Psoas muscle (tissue), 8 donors: ENCODE measurements at regions of chr18 and their contacts with region 1.

Region 1: GRCh38 chr18:2655178-2655953 is at the start of gene SMCHD1:
- DNase-seq: peak; percentile 93 to 96
- ATAC-seq: peak; percentile 88 to 92 (median 91)
- H3K4me3 ChIP-seq: peak within 1 kb of the TSS; percentile 90
- H3K27ac ChIP-seq: peak within 1 kb of the TSS; percentile 96
- H3K4me1 ChIP-seq: peaks cover 22% of the 10 kb centered on the region
- H3K27me3 ChIP-seq: no peaks in the 10 kb centered on the region
- CTCF ChIP-seq: no peak
- total RNA-seq, gene SMCHD1: 20.3 to 23.0 (median 21.6) TPM

Region 2: DNA sequence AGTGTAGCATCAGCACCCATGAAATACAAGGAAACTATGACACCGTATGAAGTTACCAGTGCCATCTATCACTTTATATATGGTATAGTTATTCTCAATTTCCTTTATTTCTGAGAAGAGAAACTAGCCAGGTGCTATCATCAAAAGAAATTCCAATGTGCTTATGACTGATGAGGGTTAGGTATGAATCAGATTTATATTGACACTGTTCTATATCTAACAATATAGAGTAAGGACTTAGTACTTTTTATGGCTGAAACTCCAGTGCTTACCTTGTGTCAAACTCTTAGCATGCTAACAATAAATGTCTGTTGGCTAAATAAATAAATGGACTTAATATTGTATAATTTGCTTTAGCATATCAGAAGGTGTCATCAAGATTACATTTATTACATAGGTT is 91.0 kb before region 1 on chr18:
- intact Hi-C with region 1: loop called in 1 of 2 experiments (anchors 10 kb)
- DNase-seq: no peak
- ATAC-seq: no peak
- H3K4me3 ChIP-seq: no peak overlapping the region
- H3K27ac ChIP-seq: no peak overlapping the region
- H3K4me1 ChIP-seq: no peaks in the 10 kb centered on the region
- H3K27me3 ChIP-seq: no peaks in the 10 kb centered on the region
- CTCF ChIP-seq: no peak

Region 3: DNA sequence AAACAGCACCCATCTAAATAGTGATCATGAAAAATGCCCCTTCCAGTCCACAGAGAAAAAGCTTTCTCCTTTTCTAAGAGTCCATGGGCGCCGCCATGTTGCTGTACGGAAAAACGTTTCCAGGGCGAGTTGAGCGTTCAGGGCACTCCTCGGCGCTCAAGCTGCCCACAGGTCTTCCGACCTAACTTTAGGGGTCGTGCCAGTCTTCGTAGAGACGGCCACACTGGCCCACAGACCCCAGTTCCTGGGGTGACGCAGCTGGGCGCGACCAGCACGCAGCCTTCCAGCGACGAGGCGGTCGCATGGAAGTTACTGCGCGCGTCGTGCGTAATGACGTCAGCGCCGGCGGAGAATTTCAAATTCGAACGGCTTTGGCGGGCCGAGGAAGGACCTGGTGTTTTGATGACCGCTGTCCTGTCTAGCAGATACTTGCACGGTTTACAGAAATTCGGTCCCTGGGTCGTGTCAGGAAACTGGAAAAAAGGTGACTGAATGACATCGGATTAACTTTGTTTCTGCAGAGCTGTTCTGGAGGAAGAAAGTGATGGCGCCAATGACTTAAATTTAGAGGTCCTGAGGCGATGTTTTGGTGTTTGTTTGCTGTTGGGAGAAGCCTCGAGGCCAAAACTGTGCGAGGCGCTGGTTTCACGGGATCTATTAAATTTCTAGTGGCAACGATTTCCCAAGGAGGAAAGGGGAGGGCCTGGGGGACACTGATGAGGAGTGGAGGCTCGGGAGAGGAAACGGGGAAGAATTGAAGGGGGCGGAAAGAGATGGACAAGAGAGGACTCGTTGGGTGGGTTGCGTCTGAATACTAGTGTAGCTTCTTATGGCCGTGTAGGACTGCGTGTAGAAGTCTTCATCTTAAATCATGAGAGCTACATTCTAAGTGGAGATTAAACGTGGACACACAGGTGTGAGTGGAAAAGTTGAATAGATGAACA is 83.9 kb before region 1 on chr18 and contains the starts of genes METTL4 and NDC80:
- intact Hi-C with region 1: loop called (anchors 5 to 10 kb)
- DNase-seq: peak; percentile 83 to 92
- ATAC-seq: peak; percentile 94 to 98 (median 94)
- H3K4me3 ChIP-seq: peak within 1 kb of the TSS; percentile 81
- H3K27ac ChIP-seq: peak within 1 kb of the TSS; percentile 96
- H3K4me1 ChIP-seq: peaks cover 15% of the 10 kb centered on the region
- H3K27me3 ChIP-seq: no peaks in the 10 kb centered on the region
- CTCF ChIP-seq: no peak
- total RNA-seq, gene METTL4: 3.7 to 5.0 (median 3.9) TPM
- total RNA-seq, gene NDC80: 0.17 to 0.42 (median 0.21) TPM in 3 of 4 donors, not detected in the other

Region 4: GRCh38 chr18:2589345-2590068 is 65.9 kb before region 1 on chr18:
- intact Hi-C with region 1: no loop called
- DNase-seq: no peak
- ATAC-seq: no peak
- H3K4me3 ChIP-seq: peak overlapping the region; percentile 9
- H3K27ac ChIP-seq: no peak overlapping the region
- H3K4me1 ChIP-seq: no peaks in the 10 kb centered on the region
- H3K27me3 ChIP-seq: no peaks in the 10 kb centered on the region
- CTCF ChIP-seq: no peak

Region 5: GRCh38 chr18:3747176-3747973 is 1092.0 kb after region 1 on chr18:
- intact Hi-C with region 1: no loop called
- DNase-seq: no peak
- ATAC-seq: no peak
- H3K4me3 ChIP-seq: no peak overlapping the region
- H3K27ac ChIP-seq: no peak overlapping the region
- H3K4me1 ChIP-seq: no peaks in the 10 kb centered on the region
- H3K27me3 ChIP-seq: no peaks in the 10 kb centered on the region
- CTCF ChIP-seq: no peak